Heart left ventricle (tissue), 16 donors: ENCODE measurements at regions of chr12 and their contacts with region 1.

Region 1: DNA sequence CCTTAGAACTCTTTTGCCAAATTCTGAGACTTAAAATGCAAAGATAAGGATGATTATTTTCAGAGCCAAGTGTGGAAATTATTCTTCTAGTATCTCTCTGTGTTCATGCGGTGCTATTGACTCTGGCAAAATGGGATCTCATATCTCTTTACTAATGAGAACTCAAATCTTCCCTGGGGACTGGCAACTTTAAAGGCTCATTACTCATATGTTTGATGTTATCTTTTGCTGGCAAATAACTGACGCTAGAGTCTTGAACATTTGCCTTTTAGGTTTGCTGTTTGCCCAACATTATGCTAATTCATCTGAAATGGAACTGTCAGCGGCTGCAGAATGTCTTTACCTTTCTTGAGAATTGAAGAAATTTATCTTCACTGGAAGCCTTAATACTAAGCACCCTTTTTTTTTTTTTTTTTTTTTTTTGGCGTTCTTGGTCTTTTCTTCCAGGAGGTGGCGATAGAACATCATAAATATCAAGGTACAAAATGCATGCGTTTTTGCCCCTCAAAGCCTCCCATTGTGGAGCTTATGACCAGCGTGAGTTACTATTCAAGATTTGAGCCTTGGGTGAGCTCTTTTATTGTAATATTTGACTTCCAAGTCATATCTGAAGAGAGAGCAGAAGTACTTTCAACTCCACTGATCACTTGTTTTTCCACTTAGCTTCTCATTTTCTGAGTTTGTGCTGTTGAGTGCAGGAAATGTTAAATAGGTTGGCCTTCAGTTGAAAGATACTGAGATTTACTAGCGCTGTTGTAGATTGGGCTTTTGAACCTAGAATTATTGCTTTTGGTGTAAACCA is 86.6 kb downstream of the CAND1 start:
- DNase-seq: no peak
- ATAC-seq: peak in 3 of 4 donors; percentile 47 to 67 (median 60)
- H3K4me3 ChIP-seq: peak overlapping the region in 1 of 12 donors; percentile 3
- H3K27ac ChIP-seq: peak overlapping the region in 6 of 12 donors; percentile 16 to 52 (median 45)
- H3K4me1 ChIP-seq: peaks cover 0 to 58% (median 31%) of the 10 kb centered on the region in 12 donors
- H3K27me3 ChIP-seq: no peaks in the 10 kb centered on the region
- CTCF ChIP-seq: peak; percentile 41 to 75 (median 64)
- POLR2A ChIP-seq: no peak

Region 2: GRCh38 chr12:67415473-67415872 is 59.7 kb after region 1 on chr12:
- intact Hi-C with region 1: loop called in 8 of 10 experiments (anchors 1 to 10 kb)
- DNase-seq: peak in 1 of 5 donors; percentile 26
- ATAC-seq: peak in 3 of 4 donors; percentile 50 to 75 (median 62)
- H3K4me3 ChIP-seq: no peak overlapping the region
- H3K27ac ChIP-seq: no peak overlapping the region
- H3K4me1 ChIP-seq: peaks cover 0 to 16% (median 5%) of the 10 kb centered on the region in 12 donors
- H3K27me3 ChIP-seq: no peaks in the 10 kb centered on the region
- CTCF ChIP-seq: peak in 11 of 12 donors; percentile 15 to 69 (median 44)
- POLR2A ChIP-seq: no peak

Region 3: GRCh38 chr12:67433385-67434175 is 77.8 kb after region 1 on chr12:
- intact Hi-C with region 1: loop called in 1 of 10 experiments (anchors 5 kb)
- DNase-seq: no peak
- ATAC-seq: no peak
- H3K4me3 ChIP-seq: no peak overlapping the region
- H3K27ac ChIP-seq: peak overlapping the region in 8 of 12 donors; percentile 30 to 80 (median 70)
- H3K4me1 ChIP-seq: peaks cover 0 to 36% (median 24%) of the 10 kb centered on the region in 12 donors
- H3K27me3 ChIP-seq: no peaks in the 10 kb centered on the region
- CTCF ChIP-seq: no peak
- POLR2A ChIP-seq: no peak

Region 4: DNA sequence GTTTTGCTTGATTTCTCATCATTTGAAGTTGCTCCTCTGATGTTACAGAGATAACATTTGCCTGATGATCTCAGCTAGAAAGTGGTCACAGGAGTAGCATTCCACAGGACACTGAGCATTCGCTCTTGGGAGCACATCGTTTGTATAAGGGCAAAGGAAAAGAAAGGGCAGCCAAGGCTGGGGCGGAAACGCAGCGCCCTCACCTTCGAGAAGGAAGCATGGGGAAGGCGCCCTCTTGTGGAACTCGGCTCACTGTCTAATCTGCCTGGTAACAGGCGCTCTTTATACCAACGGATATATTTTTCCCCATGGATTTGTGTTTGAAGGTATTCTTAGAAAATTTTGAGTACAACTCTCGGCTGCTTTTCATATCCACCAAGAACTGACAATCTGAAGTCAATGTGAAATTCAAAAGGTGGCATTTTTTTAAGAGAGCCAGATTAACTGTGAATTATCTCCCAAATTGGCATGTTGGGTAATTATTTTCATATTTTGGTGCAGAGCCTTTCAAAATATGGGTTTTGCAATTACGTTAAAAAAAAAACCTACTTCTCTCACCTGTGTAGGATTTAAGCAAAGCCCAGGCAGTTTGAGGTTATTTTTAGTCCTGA is 86.1 kb after region 1 on chr12:
- intact Hi-C with region 1: loop called in 2 of 10 experiments (anchors 5 kb)
- DNase-seq: peak; percentile 85 to 92 (median 87)
- ATAC-seq: peak; percentile 94 to 98 (median 96)
- H3K4me3 ChIP-seq: peak overlapping the region in 6 of 12 donors; percentile 3 to 49 (median 23)
- H3K27ac ChIP-seq: peak overlapping the region in 11 of 12 donors; percentile 3 to 52 (median 33)
- H3K4me1 ChIP-seq: peaks cover 0 to 18% (median 11%) of the 10 kb centered on the region in 12 donors
- H3K27me3 ChIP-seq: no peaks in the 10 kb centered on the region
- CTCF ChIP-seq: peak; percentile 67 to 92 (median 84)
- POLR2A ChIP-seq: no peak

Region 5: GRCh38 chr12:67661311-67662021 is 305.7 kb after region 1 on chr12:
- intact Hi-C with region 1: loop called in 2 of 10 experiments (anchors 10 kb)
- DNase-seq: no peak
- ATAC-seq: peak; percentile 56 to 71 (median 57)
- H3K4me3 ChIP-seq: no peak overlapping the region
- H3K27ac ChIP-seq: peak overlapping the region in 6 of 12 donors; percentile 1 to 76 (median 38)
- H3K4me1 ChIP-seq: peaks cover 2 to 95% (median 77%) of the 10 kb centered on the region in 12 donors
- H3K27me3 ChIP-seq: no peaks in the 10 kb centered on the region
- CTCF ChIP-seq: no peak
- POLR2A ChIP-seq: no peak

Region 6: DNA sequence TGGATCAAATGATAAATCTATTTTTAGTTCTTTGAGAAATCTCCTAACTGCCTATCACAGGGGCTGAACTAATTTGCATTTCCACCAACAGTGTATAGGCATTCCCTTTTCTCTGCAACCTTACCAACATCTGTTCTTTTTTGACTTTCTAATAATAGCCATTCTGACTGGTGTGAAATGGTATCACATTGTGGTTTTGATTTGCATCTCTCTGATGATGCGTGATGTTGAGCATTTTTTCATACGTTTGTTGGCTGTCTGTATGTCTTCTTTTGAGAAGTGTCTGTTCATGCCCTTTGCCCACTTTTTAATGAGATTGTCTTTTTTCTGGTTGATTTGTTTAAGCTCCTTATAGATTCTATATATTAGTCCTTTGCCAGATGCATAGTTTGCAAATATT is 700.5 kb after region 1 on chr12:
- intact Hi-C with region 1: no loop called
- DNase-seq: no peak
- ATAC-seq: no peak
- H3K4me3 ChIP-seq: no peak overlapping the region
- H3K27ac ChIP-seq: no peak overlapping the region
- H3K4me1 ChIP-seq: no peaks in the 10 kb centered on the region
- H3K27me3 ChIP-seq: no peaks in the 10 kb centered on the region
- CTCF ChIP-seq: no peak
- POLR2A ChIP-seq: no peak